ENCODE measurements at regions of chr2 and their contacts with region 1.

Region 1: DNA sequence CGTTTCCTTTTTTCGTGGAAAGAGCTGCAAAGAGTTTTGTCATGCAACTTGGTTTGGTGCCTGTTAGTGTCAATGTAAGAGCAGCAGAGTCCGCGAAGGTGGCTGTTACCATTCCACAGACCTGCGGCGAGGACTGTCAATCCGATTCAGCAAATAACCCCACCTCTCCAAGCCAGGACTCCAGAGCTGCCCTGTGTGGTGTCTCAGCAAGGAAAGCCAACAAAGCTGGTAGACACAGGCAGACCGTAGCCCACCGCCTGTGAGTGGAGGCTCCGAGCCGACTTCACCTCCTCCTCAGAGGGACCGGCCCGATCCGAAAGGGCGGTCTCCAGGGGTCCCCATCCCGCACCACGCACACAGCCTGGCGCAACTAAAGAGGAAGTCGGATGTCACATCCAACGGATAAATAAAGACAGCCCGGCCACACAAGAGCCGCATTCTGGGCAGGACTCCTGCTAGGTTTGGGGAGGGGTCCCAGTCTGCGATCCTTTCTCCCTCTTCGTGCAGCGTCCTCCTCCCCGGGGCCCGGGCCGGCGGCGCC is 819 bp downstream of the ANKRD44 start:
- DNase-seq: peak; percentile 41
- CTCF ChIP-seq: no peak

Region 2: DNA sequence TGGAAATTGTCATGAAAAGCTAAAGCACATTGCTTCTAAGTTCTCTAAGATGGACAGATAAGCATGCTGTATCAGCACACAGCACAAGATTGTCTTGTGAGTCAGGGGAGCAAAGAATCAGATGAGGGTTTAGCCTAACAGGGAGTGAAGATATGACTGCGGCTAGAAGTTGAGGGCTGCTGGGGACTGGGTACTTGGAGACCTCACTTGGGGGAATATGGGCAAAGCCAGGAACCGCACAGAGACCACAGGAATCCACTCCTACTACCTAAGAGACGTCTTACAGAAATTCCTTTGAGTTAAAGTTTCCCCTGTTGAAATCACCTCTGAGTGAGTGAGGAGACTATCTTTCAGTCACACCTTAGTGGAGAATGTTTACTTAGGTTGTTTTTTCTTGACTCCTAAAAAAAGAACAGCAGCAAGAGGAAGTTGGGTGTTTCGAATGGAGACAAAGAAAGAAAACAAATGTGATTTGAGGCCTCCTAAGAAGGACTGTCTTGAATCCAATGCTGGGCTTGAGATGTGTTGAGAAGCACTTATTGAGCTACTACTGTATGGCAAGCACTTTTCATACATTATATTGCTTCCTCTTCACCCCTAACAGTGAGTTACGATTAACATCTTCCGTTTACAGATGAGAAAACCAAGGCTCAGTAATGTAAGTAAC is 99.9 kb before region 1 on chr2:
- in situ Hi-C with region 1: loop called (anchors 5 kb)
- DNase-seq: no peak
- CTCF ChIP-seq: no peak

Region 3: GRCh38 chr2:197647961-197648690 is 338.4 kb after region 1 on chr2:
- in situ Hi-C with region 1: no loop called
- DNase-seq: no peak
- CTCF ChIP-seq: no peak